ENCODE measurements at regions of chr14 and their contacts with region 1.

Region 1: DNA sequence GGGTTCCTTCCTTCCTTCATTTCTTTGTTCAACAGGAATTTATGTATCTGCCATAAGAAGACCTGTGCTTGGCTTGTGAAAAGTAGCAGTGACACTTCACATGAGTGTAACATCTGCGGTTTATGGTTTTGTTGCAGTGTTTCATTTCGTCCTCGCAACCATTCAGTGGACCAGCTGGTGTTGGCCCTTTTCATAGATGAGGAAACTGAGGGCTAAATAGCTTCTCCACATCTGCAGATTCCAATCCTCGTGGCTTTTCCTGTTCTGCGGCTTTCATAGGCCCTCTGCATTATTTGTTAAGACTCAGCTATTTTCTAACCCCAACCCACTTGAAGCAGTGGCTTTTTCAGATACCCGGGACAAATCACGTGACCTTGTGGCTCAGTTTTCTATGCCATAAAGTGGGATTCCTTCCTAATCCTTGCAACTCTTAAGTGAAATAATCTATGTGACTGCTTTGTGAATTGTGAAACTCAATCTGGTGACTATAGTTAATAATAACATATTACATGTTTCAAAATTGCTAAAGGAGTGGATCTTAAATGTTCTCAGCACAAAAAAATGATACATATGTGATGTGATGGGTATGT is 17.2 kb downstream of the EML1 start:
- DNase-seq: no peak
- ATAC-seq: no peak
- H3K4me3 ChIP-seq: no peak overlapping the region
- H3K4me3 Mint-ChIP-seq: no peak overlapping the region
- H3K27ac ChIP-seq: no peak overlapping the region
- H3K27ac Mint-ChIP-seq: no peak overlapping the region
- H3K4me1 ChIP-seq: no peaks in the 10 kb centered on the region
- H3K4me1 Mint-ChIP-seq: no peaks in the 10 kb centered on the region
- H3K27me3 ChIP-seq: no peaks in the 10 kb centered on the region
- H3K27me3 Mint-ChIP-seq: peaks cover 17% of the 10 kb centered on the region
- CTCF ChIP-seq: no peak

Region 2: DNA sequence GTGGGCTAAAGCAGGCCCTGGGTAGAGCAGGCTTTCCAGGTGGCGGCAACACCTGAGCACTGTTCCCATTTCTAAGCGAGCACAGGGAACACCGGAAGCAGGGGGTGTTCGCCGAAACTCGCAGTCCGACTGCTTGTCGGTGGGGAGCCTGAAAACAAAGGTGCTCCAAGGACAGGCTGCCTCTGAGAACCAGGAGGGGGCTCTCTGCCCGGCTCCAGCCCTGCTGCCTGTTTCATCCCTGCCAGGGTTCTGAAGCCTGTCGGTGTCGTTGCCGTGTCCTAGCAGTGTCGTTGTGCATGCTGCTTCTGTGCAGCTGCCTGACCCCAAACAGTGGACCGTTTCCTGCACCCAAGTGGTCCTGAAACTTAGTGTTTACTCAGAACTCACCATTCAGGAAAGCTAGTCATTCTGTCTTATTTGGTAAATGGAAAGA is 307.4 kb before region 1 on chr14:
- CTCF ChIA-PET with region 1: no interaction called
- POLR2A ChIA-PET with region 1: no interaction called
- intact Hi-C with region 1: no loop called
- DNase-seq: no peak
- ATAC-seq: no peak
- H3K4me3 ChIP-seq: no peak overlapping the region
- H3K4me3 Mint-ChIP-seq: no peak overlapping the region
- H3K27ac ChIP-seq: no peak overlapping the region
- H3K27ac Mint-ChIP-seq: no peak overlapping the region
- H3K4me1 ChIP-seq: no peaks in the 10 kb centered on the region
- H3K4me1 Mint-ChIP-seq: no peaks in the 10 kb centered on the region
- H3K27me3 ChIP-seq: no peaks in the 10 kb centered on the region
- H3K27me3 Mint-ChIP-seq: no peaks in the 10 kb centered on the region
- CTCF ChIP-seq: no peak

Region 3: GRCh38 chr14:99820702-99821331 is 10.4 kb after region 1 on chr14:
- CTCF ChIA-PET with region 1: no interaction called
- POLR2A ChIA-PET with region 1: interaction called, 10 read pairs
- intact Hi-C with region 1: no loop called
- DNase-seq: no peak
- ATAC-seq: no peak
- H3K4me3 ChIP-seq: no peak overlapping the region
- H3K4me3 Mint-ChIP-seq: no peak overlapping the region
- H3K27ac ChIP-seq: no peak overlapping the region
- H3K27ac Mint-ChIP-seq: no peak overlapping the region
- H3K4me1 ChIP-seq: peaks cover 7% of the 10 kb centered on the region
- H3K4me1 Mint-ChIP-seq: peaks cover 22% of the 10 kb centered on the region
- H3K27me3 ChIP-seq: no peaks in the 10 kb centered on the region
- H3K27me3 Mint-ChIP-seq: peaks cover 28% of the 10 kb centered on the region
- CTCF ChIP-seq: no peak

Region 4: GRCh38 chr14:100446572-100446971 is 636.2 kb after region 1 on chr14:
- CTCF ChIA-PET with region 1: no interaction called
- POLR2A ChIA-PET with region 1: no interaction called
- intact Hi-C with region 1: no loop called
- DNase-seq: no peak
- ATAC-seq: no peak
- H3K4me3 ChIP-seq: no peak overlapping the region
- H3K4me3 Mint-ChIP-seq: no peak overlapping the region
- H3K27ac ChIP-seq: no peak overlapping the region
- H3K27ac Mint-ChIP-seq: no peak overlapping the region
- H3K4me1 ChIP-seq: no peaks in the 10 kb centered on the region
- H3K4me1 Mint-ChIP-seq: peaks cover 11% of the 10 kb centered on the region
- H3K27me3 ChIP-seq: no peaks in the 10 kb centered on the region
- H3K27me3 Mint-ChIP-seq: no peaks in the 10 kb centered on the region
- CTCF ChIP-seq: no peak